CD8-positive, alpha-beta T cell (primary cell): ENCODE measurements at regions of chr17 and their contacts with region 1.

Region 1: GRCh38 chr17:18183334-18184142 is at the start of gene ALKBH5:
- DNase-seq: peak; percentile 93 to 99 (median 98)
- ATAC-seq: peak; percentile 77
- H3K4me3 ChIP-seq: peak within 1 kb of the TSS; percentile 58 to 81
- H3K4me3 Mint-ChIP-seq: peak within 1 kb of the TSS; percentile 95
- H3K27ac ChIP-seq: peak within 1 kb of the TSS; percentile 92 to 95
- H3K27ac Mint-ChIP-seq: peak within 1 kb of the TSS; percentile 97
- H3K4me1 ChIP-seq: peaks cover 42% of the 10 kb centered on the region
- H3K4me1 Mint-ChIP-seq: peaks cover 47% of the 10 kb centered on the region
- H3K27me3 ChIP-seq: no peaks in the 10 kb centered on the region
- H3K27me3 Mint-ChIP-seq: no peaks in the 10 kb centered on the region
- CTCF ChIP-seq: peak; percentile 73
- total RNA-seq, gene ALKBH5: 138 to 141 TPM

Region 2: DNA sequence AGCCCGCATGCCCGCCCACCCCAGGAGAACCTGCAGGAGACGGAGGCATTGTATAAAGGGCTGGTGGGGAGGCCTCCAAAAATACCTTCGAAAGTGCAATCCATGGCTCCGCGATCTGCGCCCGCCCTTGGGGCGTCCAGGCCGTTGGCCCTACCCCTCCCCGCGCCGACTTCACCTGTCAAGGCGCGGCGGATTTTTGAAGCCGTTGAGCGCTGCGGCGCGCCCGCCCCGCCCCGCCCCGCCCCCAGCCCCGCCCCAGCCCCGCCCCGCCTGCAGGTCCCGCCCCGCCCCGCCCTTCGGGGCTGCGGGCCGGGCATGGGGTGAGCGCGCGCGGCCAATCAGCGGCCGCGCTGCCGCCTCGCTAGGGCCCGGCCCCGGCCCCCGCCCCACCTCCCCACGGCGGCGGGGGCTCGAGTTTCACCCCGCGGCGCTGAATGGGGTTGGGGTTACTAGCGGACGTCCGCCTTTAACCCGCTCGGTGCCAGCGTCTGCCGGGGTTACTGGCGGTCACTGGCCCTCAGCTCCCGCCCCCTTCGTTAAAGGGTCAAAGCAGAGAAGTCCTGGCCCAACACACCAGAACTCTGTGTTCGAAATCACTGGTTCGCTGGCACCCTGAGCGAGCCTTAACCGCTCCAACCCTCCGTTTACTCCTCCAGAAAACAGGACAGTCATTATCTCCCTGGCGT is 360.0 kb before region 1 on chr17:
- CTCF ChIA-PET with region 1: no interaction called
- POLR2A ChIA-PET with region 1: no interaction called
- intact Hi-C with region 1: loop called in 1 of 2 experiments (anchors 5 kb)
- DNase-seq: peak; percentile 63 to 92 (median 80)
- ATAC-seq: peak; percentile 87
- H3K4me3 ChIP-seq: peak overlapping the region; percentile 46 to 55
- H3K4me3 Mint-ChIP-seq: peak overlapping the region; percentile 81
- H3K27ac ChIP-seq: peak overlapping the region; percentile 50 to 85
- H3K27ac Mint-ChIP-seq: peak overlapping the region; percentile 95
- H3K4me1 ChIP-seq: peaks cover 95% of the 10 kb centered on the region
- H3K4me1 Mint-ChIP-seq: peaks cover 91% of the 10 kb centered on the region
- H3K27me3 ChIP-seq: no peaks in the 10 kb centered on the region
- H3K27me3 Mint-ChIP-seq: no peaks in the 10 kb centered on the region
- CTCF ChIP-seq: no peak

Region 3: DNA sequence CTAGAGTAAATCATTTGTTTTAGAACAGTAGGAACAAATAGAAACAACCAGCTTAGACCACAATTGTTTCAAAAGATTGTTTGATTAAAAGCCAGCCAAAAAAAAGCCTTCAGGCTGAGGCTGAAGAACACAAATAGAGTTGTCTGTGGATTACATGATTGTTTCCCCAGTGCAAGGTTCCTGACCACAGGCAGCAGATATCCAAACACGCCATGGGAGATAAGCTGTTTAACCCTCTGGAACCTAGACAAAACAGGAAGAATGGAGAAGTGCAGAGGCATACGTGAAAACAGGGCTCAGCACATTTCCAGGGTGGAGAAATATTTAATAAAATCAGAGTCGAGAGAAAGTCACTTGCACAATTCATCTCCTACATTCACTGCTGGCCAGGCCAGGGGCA is 165.6 kb before region 1 on chr17:
- CTCF ChIA-PET with region 1: no interaction called
- POLR2A ChIA-PET with region 1: no interaction called
- intact Hi-C with region 1: no loop called
- DNase-seq: no peak
- ATAC-seq: no peak
- H3K4me3 ChIP-seq: no peak overlapping the region
- H3K4me3 Mint-ChIP-seq: no peak overlapping the region
- H3K27ac ChIP-seq: no peak overlapping the region
- H3K27ac Mint-ChIP-seq: no peak overlapping the region
- H3K4me1 ChIP-seq: no peaks in the 10 kb centered on the region
- H3K4me1 Mint-ChIP-seq: no peaks in the 10 kb centered on the region
- H3K27me3 ChIP-seq: no peaks in the 10 kb centered on the region
- H3K27me3 Mint-ChIP-seq: no peaks in the 10 kb centered on the region
- CTCF ChIP-seq: no peak

Region 4: DNA sequence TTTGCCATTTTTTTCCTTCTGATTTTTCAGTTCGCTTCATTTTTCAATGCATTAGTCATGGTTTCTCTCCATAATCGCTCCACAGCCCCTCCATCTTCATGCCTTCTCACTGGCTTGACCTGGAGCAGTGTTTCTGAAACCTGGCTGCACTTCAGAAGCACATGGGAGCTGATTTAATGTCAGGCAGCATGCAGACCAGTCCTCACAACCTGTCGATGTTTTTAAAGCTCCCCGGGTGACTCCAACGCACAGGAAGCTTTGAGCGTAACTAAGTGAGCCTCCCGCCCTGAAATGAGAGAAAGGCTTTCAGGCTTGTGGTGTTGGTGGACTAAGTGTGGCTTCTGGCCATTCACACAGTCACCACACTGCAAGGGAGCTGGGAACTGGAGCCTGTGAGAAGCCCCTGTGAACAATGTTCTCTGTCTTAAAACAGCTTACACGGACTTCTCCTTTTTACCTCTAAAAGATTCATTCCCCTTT is 112.6 kb before region 1 on chr17:
- CTCF ChIA-PET with region 1: no interaction called
- POLR2A ChIA-PET with region 1: no interaction called
- intact Hi-C with region 1: no loop called
- DNase-seq: peak in 1 of 9 experiments; percentile 12
- ATAC-seq: no peak
- H3K4me3 ChIP-seq: no peak overlapping the region
- H3K4me3 Mint-ChIP-seq: no peak overlapping the region
- H3K27ac ChIP-seq: no peak overlapping the region
- H3K27ac Mint-ChIP-seq: no peak overlapping the region
- H3K4me1 ChIP-seq: peaks cover 4% of the 10 kb centered on the region
- H3K4me1 Mint-ChIP-seq: peaks cover 7% of the 10 kb centered on the region
- H3K27me3 ChIP-seq: no peaks in the 10 kb centered on the region
- H3K27me3 Mint-ChIP-seq: peaks cover 9% of the 10 kb centered on the region
- CTCF ChIP-seq: no peak

Region 5: GRCh38 chr17:18087610-18088491 is 95.7 kb before region 1 on chr17 and contains the start of gene DRG2:
- CTCF ChIA-PET with region 1: no interaction called
- POLR2A ChIA-PET with region 1: no interaction called
- intact Hi-C with region 1: loop called (anchors 1 to 5 kb)
- DNase-seq: peak; percentile 79 to 94 (median 88)
- ATAC-seq: peak; percentile 91
- H3K4me3 ChIP-seq: peak within 1 kb of the TSS; percentile 80 to 90
- H3K4me3 Mint-ChIP-seq: peak within 1 kb of the TSS; percentile 99
- H3K27ac ChIP-seq: peak within 1 kb of the TSS; percentile 78 to 87
- H3K27ac Mint-ChIP-seq: peak within 1 kb of the TSS; percentile 98
- H3K4me1 ChIP-seq: peaks cover 15% of the 10 kb centered on the region
- H3K4me1 Mint-ChIP-seq: peaks cover 33% of the 10 kb centered on the region
- H3K27me3 ChIP-seq: no peaks in the 10 kb centered on the region
- H3K27me3 Mint-ChIP-seq: no peaks in the 10 kb centered on the region
- CTCF ChIP-seq: no peak
- total RNA-seq, gene DRG2: 45.4 to 46.3 TPM

Region 6: DNA sequence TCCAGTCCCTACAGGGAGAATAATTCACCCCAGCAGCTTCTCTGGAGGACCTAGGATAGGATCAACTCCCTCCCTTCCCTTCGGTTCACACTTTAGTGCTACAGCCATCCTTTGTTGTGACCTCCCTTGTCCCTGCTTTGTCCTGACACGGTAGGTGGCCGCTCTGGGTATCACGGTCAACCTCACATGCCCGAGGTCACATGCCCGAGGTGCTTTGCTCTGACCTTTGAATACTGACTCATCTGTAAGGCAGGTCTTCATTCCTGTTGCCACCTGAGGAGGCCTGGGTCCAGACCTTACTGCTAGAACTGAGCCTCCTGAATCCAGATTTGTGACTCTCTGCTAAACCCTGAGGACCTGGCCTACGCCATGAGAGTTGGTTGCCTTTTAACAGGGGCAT is 19.8 kb after region 1 on chr17:
- CTCF ChIA-PET with region 1: interaction called, 3 read pairs
- POLR2A ChIA-PET with region 1: interaction called, 13 read pairs
- intact Hi-C with region 1: no loop called
- DNase-seq: no peak
- ATAC-seq: no peak
- H3K4me3 ChIP-seq: no peak overlapping the region
- H3K4me3 Mint-ChIP-seq: no peak overlapping the region
- H3K27ac ChIP-seq: no peak overlapping the region
- H3K27ac Mint-ChIP-seq: no peak overlapping the region
- H3K4me1 ChIP-seq: peaks cover 24% of the 10 kb centered on the region
- H3K4me1 Mint-ChIP-seq: peaks cover 40% of the 10 kb centered on the region
- H3K27me3 ChIP-seq: no peaks in the 10 kb centered on the region
- H3K27me3 Mint-ChIP-seq: no peaks in the 10 kb centered on the region
- CTCF ChIP-seq: no peak

Region 7: DNA sequence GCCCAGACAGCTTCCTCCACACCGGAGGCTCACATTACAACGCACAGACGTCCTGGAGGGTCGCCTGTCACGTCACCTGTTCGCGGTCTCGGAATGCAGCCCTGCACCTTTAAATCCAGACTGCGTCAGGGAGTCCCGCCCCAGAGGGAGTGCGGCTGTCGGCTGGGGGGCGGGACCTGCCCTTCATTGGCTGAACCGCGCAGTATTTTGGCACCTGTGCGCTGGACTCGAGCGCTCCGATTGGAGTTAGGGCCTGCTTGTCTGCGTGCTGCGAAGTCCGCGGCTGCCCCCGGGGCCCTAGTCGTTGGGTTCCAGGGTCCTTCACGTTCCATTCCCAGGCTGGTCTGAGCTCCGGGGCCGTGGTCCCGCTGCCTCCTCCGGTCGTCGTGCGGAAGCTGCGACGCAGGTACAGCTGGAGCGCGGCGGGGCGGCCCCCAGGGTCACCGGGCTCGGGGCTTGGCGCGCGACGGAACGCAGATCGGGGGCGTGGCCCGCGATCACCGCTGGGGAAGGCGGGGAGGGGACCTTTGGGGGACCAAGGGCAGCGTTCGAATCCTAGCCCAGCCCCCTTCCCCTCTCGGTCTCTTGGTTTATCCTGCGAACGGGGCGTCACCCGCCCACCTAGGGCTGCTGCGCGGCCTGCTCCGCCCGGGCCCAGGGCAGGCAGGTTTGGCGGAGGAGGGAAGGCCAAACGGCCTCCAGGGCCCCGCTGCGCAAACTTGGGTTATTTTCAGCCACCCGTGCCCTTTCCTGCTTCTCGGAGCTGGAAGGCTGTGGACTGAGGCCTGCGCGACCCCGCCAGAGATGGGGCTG is 77.0 kb after region 1 on chr17 and contains the start of gene MIEF2:
- CTCF ChIA-PET with region 1: no interaction called
- POLR2A ChIA-PET with region 1: interaction called, 9 read pairs
- intact Hi-C with region 1: loop called (anchors 1 kb)
- DNase-seq: peak; percentile 83 to 95 (median 93)
- ATAC-seq: peak; percentile 87
- H3K4me3 ChIP-seq: peak within 1 kb of the TSS; percentile 62 to 78
- H3K4me3 Mint-ChIP-seq: peak within 1 kb of the TSS; percentile 78
- H3K27ac ChIP-seq: peak within 1 kb of the TSS; percentile 83 to 93
- H3K27ac Mint-ChIP-seq: peak within 1 kb of the TSS; percentile 92
- H3K4me1 ChIP-seq: peaks cover 47% of the 10 kb centered on the region
- H3K4me1 Mint-ChIP-seq: peaks cover 43% of the 10 kb centered on the region
- H3K27me3 ChIP-seq: no peaks in the 10 kb centered on the region
- H3K27me3 Mint-ChIP-seq: no peaks in the 10 kb centered on the region
- CTCF ChIP-seq: no peak
- total RNA-seq, gene MIEF2: 9.6 to 11.0 TPM